Right ventricle myocardium inferior (tissue), 1 donor: ENCODE measurements at regions of chr6 and their contacts with region 1.

Region 1: DNA sequence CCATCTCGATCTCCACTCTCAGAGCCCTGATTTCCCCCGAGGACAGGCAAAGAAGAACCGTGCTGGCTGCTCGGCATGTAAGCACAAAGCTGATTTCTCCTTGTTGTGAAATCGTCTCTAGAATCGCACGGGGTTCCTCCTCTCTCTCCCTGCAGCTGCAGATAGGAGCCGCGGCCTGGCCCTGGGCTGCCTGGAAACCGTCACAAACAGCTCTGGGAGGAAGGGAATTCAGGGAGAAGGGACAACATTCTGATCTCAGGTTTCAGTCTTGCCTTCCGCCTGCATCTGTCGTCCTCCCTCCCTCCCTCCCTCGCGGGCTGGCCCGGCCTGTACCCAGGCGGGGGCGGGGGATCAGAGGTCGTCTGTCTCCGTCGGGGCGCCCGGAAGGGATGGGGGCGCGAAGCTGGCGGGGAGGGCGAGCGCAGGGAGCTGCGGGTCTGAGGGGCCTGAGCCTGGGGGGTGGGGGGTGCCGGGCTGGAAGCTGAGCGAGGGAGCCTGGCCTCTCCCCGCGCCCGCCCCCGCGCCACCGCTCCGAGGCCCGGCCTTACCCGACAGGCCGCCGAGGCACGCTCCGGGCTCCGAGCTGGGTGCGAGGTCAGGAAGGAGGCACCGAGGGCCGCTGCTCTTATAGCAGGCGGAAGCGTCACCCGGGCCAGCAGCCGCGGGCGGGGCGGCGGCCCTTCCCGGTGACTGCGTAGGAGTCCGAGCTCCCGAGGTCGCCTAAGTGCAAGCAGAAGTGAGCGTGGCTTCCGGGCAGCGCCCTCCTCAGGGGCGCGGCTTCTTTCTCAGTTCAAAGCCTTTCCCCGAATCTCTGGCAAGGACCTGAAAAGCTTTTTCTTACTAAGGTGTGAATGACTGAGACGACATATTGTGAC is at the start of gene SERPINB1:
- DNase-seq: peak; percentile 98
- ATAC-seq: peak; percentile 91
- total RNA-seq, gene SERPINB1: 27.5 TPM

Region 2: DNA sequence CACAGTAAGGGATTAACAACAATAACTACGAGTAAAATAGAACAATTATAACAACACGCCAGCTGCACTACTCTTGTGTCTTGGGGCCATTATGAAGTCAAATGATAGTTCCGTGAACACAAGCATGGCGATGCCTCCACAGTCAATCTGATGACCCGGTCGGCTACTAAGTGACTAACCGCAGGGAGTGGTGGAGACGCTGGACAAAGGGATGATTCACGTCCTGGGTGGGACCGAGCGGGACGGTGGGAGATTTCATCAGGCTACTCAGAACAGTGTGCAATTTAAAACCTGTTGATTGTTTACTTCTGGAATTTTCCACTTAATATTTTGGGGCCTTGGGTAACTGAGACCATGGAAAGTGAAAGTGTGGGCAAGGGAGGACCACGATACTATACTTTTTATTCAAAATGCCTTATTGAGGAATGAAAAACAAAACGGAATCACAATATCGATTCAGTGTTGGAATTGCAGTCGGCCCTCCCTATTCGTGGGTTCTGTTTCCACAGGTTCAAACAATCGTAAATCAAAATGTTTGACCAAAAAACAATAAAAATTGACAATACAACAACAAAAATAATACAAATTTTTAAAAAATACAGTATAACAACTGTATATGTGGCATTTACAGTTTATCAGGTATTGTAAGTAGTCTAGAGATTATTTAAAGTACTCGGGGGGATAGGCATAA is 157.3 kb before region 1 on chr6:
- intact Hi-C with region 1: no loop called
- DNase-seq: no peak
- ATAC-seq: no peak

Region 3: DNA sequence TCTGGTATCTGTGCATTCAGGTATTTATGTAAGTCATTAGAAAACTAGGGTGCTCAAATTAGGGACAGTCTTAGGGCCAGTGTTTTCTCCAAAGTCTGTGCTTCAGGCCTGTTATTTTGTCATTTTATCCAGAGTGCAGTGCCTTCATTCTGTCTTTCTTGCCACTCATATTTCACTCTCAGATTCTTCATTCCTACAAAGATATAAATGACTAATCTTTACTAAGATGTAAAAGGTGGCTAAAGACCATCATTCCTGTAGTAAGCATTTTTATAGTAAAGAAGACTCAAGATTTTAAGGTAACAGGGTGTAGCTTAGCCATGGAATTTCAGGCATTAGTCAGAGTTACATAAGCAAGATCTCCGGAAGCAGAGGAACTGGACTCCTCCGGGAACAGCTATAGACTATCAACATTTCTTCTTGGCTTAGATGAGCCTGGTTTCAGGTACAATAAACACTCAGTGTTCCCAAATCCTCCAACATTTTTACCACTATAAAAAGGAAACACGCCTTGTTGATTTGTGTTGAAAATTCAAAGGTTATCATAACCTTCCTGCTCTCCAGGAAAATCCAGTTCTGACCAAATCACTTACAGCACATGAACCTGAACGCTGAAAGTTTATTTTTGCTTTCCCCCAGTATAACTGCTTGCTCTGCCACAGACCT is 23.6 kb before region 1 on chr6:
- intact Hi-C with region 1: loop called (anchors 1 kb)
- DNase-seq: no peak
- ATAC-seq: peak; percentile 72

Region 4: DNA sequence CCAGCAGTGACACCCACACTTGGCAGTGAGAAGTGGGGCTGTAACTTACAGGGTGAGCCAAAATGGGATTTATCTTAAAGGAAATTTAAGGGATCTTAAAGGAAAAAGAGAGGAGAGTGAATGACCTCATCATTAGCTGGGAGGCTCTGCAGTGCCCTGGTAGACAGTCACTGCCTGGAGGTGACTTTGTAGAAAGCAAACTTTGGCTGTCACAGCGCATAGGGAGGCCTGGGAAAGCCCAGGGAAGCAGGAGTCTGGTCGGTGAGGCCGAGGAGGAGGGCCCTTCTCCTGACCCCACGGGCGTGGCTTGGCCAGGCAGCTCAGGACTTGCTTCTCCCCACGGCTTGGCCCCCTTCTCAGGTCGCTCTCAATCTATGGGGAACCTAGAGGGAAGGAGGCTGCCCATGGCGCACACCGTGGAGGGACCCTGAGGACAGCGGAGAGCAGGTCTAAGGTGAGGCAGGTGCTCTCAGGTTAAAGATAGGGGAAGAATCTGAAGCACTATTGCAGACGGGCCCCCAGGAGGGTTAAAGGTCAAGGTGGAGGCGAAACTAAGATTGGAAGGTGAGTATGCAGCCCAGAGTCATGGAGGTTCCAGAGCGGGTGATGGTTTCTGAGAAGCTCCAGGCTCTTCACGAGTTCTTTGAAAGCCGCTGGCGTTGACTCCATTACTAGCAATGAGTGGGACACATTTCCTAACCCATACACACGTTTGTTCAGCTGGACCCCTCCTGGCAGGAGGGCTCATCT is 211.2 kb after region 1 on chr6:
- intact Hi-C with region 1: loop called (anchors 5 kb)
- DNase-seq: no peak
- ATAC-seq: no peak

Region 5: DNA sequence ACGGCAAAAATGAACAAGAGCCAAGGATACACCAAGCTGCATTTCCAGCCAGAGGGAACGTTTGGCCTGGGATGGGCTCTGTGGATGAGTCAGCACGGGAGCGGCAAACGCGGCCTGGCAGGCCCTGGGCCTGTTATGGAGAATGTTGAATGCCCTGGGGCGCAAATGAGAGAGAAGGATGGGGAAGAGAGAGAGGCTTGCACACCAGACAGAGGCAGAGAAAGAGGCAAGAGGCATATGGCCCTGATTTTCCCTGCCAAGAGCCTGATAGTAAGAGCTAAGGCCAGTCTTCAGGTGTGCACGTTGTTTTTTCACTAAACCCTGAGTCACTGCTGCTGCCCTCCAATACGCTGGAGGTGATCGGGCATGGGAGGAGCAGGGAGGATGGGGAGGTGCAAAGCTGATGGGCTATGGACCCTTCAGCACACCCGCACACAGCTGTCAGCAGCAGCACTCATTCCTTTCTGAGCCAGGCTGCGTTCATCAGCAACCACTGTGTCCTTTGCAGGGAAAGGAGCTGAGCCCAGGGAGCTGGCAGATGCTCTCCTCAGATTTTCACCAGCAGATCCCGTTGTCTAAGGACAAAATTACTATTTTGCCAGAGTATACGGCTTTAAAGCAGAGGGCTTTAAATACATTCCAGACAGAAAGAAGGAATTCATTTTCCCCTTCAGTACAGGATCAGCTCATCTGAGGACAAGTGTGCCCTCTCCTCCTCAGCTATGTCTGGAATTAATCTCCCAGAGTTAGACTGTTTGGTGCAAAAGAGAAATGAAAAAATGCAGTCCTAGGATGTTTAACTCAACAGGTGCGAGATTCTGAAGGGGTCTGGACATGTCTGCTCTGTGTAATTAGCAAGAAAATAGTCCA is 677.1 kb after region 1 on chr6:
- intact Hi-C with region 1: no loop called
- DNase-seq: no peak
- ATAC-seq: no peak